ENCODE measurements at regions of chr14 and their contacts with region 1.

Region 1: GRCh38 chr14:59360923-59361794 is 104.0 kb downstream of the GPR135 start:
- DNase-seq: peak; percentile 86
- ATAC-seq: peak; percentile 93
- H3K4me3 ChIP-seq: peak overlapping the region in 1 of 2 experiments; percentile 30; a peak in 2 of 4 replicates
- H3K27ac ChIP-seq: peak overlapping the region; percentile 79
- H3K4me1 ChIP-seq: peaks cover 54 to 69% of the 10 kb centered on the region in 2 experiments
- H3K27me3 ChIP-seq: no peaks in the 10 kb centered on the region
- CTCF ChIP-seq: no peak
- POLR2A ChIP-seq: no peak
- RAD21 ChIP-seq: 0 out of 2 replicates have a peak, but pooled peaks have one; percentile 22

Region 2: GRCh38 chr14:59245809-59246295 is 115.3 kb before region 1 on chr14:
- CTCF ChIA-PET with region 1: no interaction called
- POLR2A ChIA-PET with region 1: no interaction called
- RAD21 ChIA-PET with region 1: no interaction called
- intact Hi-C with region 1: no loop called
- DNase-seq: no peak
- ATAC-seq: no peak
- H3K4me3 ChIP-seq: no peak overlapping the region
- H3K27ac ChIP-seq: no peak overlapping the region
- H3K4me1 ChIP-seq: no peaks in the 10 kb centered on the region; a peak in 1 of 4 replicates
- H3K27me3 ChIP-seq: no peaks in the 10 kb centered on the region
- CTCF ChIP-seq: no peak
- POLR2A ChIP-seq: no peak
- RAD21 ChIP-seq: no peak

Region 3: GRCh38 chr14:59275653-59276052 is 85.5 kb before region 1 on chr14:
- CTCF ChIA-PET with region 1: no interaction called
- POLR2A ChIA-PET with region 1: no interaction called
- RAD21 ChIA-PET with region 1: no interaction called
- intact Hi-C with region 1: loop called (anchors 5 kb)
- DNase-seq: peak; percentile 75
- ATAC-seq: peak; percentile 75
- H3K4me3 ChIP-seq: peak overlapping the region in 1 of 2 experiments; percentile 21; a peak in 1 of 4 replicates
- H3K27ac ChIP-seq: peak overlapping the region; percentile 64; the same call in 1 of the 2 replicates
- H3K4me1 ChIP-seq: peaks cover 46 to 57% of the 10 kb centered on the region in 2 experiments
- H3K27me3 ChIP-seq: no peaks in the 10 kb centered on the region
- CTCF ChIP-seq: no peak
- POLR2A ChIP-seq: no peak
- RAD21 ChIP-seq: no peak

Measured in HCT116 (cell line).